ENCODE measurements at regions of chr17 and their contacts with region 1.

Region 1: DNA sequence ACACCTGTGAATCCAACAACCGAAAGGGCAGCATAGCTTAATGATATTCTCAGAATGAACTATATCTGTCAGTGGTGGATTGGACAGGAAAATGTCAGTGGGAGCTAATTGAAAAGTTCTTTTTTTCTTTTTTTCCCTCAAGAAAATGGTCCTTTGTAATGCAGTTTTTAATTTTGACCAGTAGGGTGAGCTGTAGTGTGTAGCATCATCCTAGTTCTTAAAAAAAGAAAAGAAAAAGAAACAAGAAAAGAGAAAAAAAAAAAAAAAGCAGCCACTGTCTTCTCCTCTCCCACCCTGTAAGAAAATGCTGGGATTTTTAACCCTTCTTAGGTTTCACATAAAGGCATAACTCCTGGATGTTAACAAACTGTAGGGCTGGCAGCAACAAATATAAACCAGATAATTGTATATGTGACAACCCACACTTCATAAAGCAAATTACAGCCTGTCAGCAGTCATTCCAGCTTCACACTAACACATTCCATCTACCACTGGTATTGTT is 78.1 kb downstream of the SKAP1 start:
- DNase-seq: peak; percentile 32
- H3K4me3 ChIP-seq: no peak overlapping the region; a peak in 1 of 4 replicates
- H3K27ac ChIP-seq: no peak overlapping the region
- H3K4me1 ChIP-seq: no peaks in the 10 kb centered on the region
- H3K27me3 ChIP-seq: peaks cover 50% of the 10 kb centered on the region
- CTCF ChIP-seq: peak; percentile 94
- EP300 ChIP-seq: no peak
- RAD21 ChIP-seq: peak; percentile 62

Region 2: GRCh38 chr17:48179071-48179945 is 172.6 kb before region 1 on chr17:
- CTCF ChIA-PET with region 1: no interaction called
- POLR2A ChIA-PET with region 1: no interaction called
- DNase-seq: no peak
- H3K4me3 ChIP-seq: no peak overlapping the region
- H3K27ac ChIP-seq: no peak overlapping the region
- H3K4me1 ChIP-seq: no peaks in the 10 kb centered on the region
- H3K27me3 ChIP-seq: peaks cover 61% of the 10 kb centered on the region
- CTCF ChIP-seq: no peak
- EP300 ChIP-seq: no peak
- RAD21 ChIP-seq: no peak

Region 3: GRCh38 chr17:48363161-48363560 is 11.3 kb after region 1 on chr17:
- CTCF ChIA-PET with region 1: interaction called, 21 read pairs
- POLR2A ChIA-PET with region 1: no interaction called
- DNase-seq: no peak
- H3K4me3 ChIP-seq: no peak overlapping the region
- H3K27ac ChIP-seq: no peak overlapping the region
- H3K4me1 ChIP-seq: no peaks in the 10 kb centered on the region
- H3K27me3 ChIP-seq: peaks cover 66% of the 10 kb centered on the region
- CTCF ChIP-seq: no peak
- EP300 ChIP-seq: no peak
- RAD21 ChIP-seq: no peak

Region 4: GRCh38 chr17:48374650-48375230 is 22.9 kb after region 1 on chr17:
- CTCF ChIA-PET with region 1: interaction called, 25 read pairs
- POLR2A ChIA-PET with region 1: no interaction called
- DNase-seq: peak; percentile 24
- H3K4me3 ChIP-seq: peak overlapping the region in 1 of 2 experiments; percentile 23; a peak in 1 of 4 replicates
- H3K27ac ChIP-seq: no peak overlapping the region
- H3K4me1 ChIP-seq: no peaks in the 10 kb centered on the region
- H3K27me3 ChIP-seq: peaks cover 65% of the 10 kb centered on the region
- CTCF ChIP-seq: peak; percentile 50; the same call in 1 of the 2 replicates
- EP300 ChIP-seq: no peak
- RAD21 ChIP-seq: peak; percentile 46

Measured in SK-N-SH (cell line).